ENCODE measurements at regions of chr7 and their contacts with region 1.

Region 1: DNA sequence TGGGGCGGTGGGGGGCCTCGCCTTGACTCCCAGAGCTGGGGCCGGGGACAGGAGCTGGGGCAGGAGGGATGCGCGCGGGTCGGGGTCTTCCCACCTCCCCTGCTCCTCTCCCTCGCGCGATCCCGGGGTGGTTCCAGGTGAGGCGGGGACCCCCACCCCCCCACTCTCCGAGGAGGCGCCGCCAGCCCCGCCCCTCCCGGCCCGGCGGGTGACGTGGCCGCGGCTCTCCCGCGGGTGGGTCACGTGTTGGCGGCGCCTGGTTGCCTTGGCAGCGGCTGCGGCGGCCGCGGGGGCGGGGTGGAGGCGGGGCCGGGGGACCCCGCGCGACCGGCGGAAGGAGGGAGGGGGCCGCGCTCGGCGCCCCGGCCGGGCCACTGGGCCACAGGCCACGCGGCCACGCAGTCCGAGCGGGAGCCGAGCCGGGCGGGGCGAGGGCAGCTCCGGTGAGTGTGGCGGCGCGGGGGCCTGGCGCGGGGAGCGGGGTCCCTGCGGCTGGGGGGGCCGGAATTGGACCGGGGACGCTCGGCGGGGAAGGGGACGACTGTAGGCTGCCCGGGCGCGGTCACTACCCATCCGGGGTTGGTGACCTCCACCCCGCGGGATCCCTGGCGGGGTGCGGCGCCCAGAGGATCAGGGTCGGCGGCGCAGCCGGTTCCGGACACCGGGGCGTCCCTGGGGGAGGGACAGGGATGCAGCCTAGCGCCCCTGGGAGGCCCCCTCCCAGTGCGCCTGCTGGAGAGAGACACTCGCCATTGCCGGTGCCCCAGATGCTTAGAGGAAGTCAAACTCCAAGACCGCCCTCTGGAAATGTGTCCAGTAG is at the start of gene ORAI2:
- DNase-seq: peak; percentile 82 to 93 (median 86)
- ATAC-seq: peak; percentile 27 to 86 (median 80)
- H3K4me3 ChIP-seq: peak within 1 kb of the TSS; percentile 73 to 95 (median 86)
- H3K27ac ChIP-seq: peak within 1 kb of the TSS in 11 of 12 donors; percentile 54 to 84 (median 69)
- H3K4me1 ChIP-seq: peaks cover 0 to 44% (median 5%) of the 10 kb centered on the region in 12 donors
- H3K27me3 ChIP-seq: no peaks in the 10 kb centered on the region
- CTCF ChIP-seq: no peak
- POLR2A ChIP-seq: peak in 1 of 2 donors; percentile 30
- total RNA-seq, gene ORAI2: 1.9 to 22.0 (median 4.8) TPM

Region 2: GRCh38 chr7:102152672-102153585 is 280.5 kb before region 1 on chr7:
- intact Hi-C with region 1: no loop called
- DNase-seq: peak in 4 of 5 donors; percentile 19 to 72 (median 38)
- ATAC-seq: peak; percentile 80 to 90 (median 86)
- H3K4me3 ChIP-seq: no peak overlapping the region
- H3K27ac ChIP-seq: peak overlapping the region; percentile 41 to 92 (median 75)
- H3K4me1 ChIP-seq: peaks cover 0 to 28% (median 14%) of the 10 kb centered on the region in 12 donors
- H3K27me3 ChIP-seq: no peaks in the 10 kb centered on the region
- CTCF ChIP-seq: no peak
- POLR2A ChIP-seq: no peak

Region 3: GRCh38 chr7:102396027-102397019 is 37.1 kb before region 1 on chr7 and contains the start of gene PRKRIP1:
- intact Hi-C with region 1: loop called in 1 of 10 experiments (anchors 1 kb)
- DNase-seq: peak; percentile 84 to 88 (median 85)
- ATAC-seq: peak; percentile 81 to 95 (median 92)
- H3K4me3 ChIP-seq: peak within 1 kb of the TSS; percentile 66 to 97 (median 84)
- H3K27ac ChIP-seq: peak within 1 kb of the TSS; percentile 51 to 90 (median 84)
- H3K4me1 ChIP-seq: peaks cover 0 to 22% (median 10%) of the 10 kb centered on the region in 12 donors
- H3K27me3 ChIP-seq: no peaks in the 10 kb centered on the region
- CTCF ChIP-seq: no peak
- POLR2A ChIP-seq: peak in 1 of 2 donors; percentile 43
- total RNA-seq, gene PRKRIP1: 7.4 to 15.2 (median 11.4) TPM

Region 4: DNA sequence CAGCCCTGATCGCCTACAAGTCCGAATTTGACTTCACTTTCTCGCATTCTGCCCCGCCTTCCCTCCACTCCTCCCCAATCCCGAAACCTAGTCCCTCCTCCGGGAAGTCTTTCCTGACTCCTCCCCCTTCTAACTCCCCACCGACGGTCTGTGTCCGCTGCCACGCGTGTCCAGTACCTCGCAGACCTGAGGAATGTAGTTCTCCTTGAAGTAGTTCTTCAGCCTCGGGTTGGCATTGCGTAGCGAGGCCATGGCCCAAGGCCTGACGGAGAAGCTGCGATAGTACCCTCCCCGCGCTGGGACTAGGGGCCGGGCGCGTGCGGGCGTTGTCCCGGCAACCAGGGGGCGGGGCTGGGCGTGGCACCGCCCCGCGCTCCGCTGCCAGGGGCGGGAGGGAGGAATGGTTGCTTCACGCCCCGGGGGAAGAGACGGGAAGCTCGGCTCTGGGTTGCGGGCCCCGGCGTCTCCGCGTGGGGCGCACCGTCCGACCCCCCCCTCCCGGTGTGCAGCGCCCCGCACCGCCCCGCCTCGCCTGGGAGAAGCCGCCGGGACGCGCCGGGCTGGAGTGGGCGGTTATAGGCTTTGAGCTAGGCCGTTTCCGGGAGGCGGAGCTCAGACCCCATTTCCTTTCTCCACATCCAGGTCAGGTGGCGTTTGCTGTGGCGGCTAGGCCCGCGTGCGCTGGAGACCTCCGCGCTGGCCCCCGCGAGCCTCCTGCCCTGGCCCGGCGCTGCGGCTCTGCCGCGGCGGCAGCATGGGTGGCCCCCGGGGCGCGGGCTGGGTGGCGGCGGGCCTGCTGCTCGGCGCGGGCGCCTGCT is 641.3 kb after region 1 on chr7 and contains the starts of genes ARMC10 and FBXL13:
- intact Hi-C with region 1: no loop called
- DNase-seq: peak; percentile 90 to 92 (median 92)
- ATAC-seq: peak; percentile 87 to 98 (median 97)
- H3K4me3 ChIP-seq: peak within 1 kb of the TSS; percentile 53 to 99 (median 86)
- H3K27ac ChIP-seq: peak within 1 kb of the TSS; percentile 86 to 96 (median 93)
- H3K4me1 ChIP-seq: peaks cover 0 to 30% (median 16%) of the 10 kb centered on the region in 12 donors
- H3K27me3 ChIP-seq: no peaks in the 10 kb centered on the region
- CTCF ChIP-seq: peak in 9 of 12 donors; percentile 18 to 53 (median 28)
- POLR2A ChIP-seq: peak in 1 of 2 donors; percentile 64
- total RNA-seq, gene ARMC10: 13.5 to 29.7 (median 24.9) TPM
- total RNA-seq, gene FBXL13: 0.16 to 1.2 (median 0.55) TPM in 8 of 9 donors, not detected in the other

Measured in heart left ventricle (tissue), 16 donors.